CD4-positive, alpha-beta T cell (primary cell): ENCODE measurements at regions of chr5 and their contacts with region 1.

Region 1: GRCh38 chr5:134370871-134371833 is at the start of gene UBE2B:
- DNase-seq: peak; percentile 93 to 99 (median 97)
- ATAC-seq: peak; percentile 73
- H3K4me3 ChIP-seq: peak within 1 kb of the TSS; percentile 100
- H3K4me3 Mint-ChIP-seq: peak within 1 kb of the TSS; percentile 96
- H3K27ac ChIP-seq: peak within 1 kb of the TSS; percentile 97 to 98
- H3K27ac Mint-ChIP-seq: peak within 1 kb of the TSS; percentile 97
- H3K4me1 ChIP-seq: peaks cover 37% of the 10 kb centered on the region
- H3K4me1 Mint-ChIP-seq: peaks cover 68% of the 10 kb centered on the region
- H3K27me3 ChIP-seq: no peaks in the 10 kb centered on the region
- H3K27me3 Mint-ChIP-seq: peaks cover 4% of the 10 kb centered on the region
- CTCF ChIP-seq: no peak
- total RNA-seq, gene UBE2B: 225 to 228 TPM

Region 2: GRCh38 chr5:134176511-134177368 is 194.4 kb before region 1 on chr5 and contains the start of gene SKP1:
- CTCF ChIA-PET with region 1: no interaction called
- POLR2A ChIA-PET with region 1: interaction called, 16 read pairs
- intact Hi-C with region 1: loop called (anchors 2 to 10 kb)
- DNase-seq: peak; percentile 76 to 94 (median 86)
- ATAC-seq: peak; percentile 83
- H3K4me3 ChIP-seq: peak within 1 kb of the TSS; percentile 98
- H3K4me3 Mint-ChIP-seq: peak within 1 kb of the TSS; percentile 97
- H3K27ac ChIP-seq: peak within 1 kb of the TSS; percentile 98 to 99
- H3K27ac Mint-ChIP-seq: peak within 1 kb of the TSS; percentile 98
- H3K4me1 ChIP-seq: peaks cover 19% of the 10 kb centered on the region
- H3K4me1 Mint-ChIP-seq: peaks cover 36% of the 10 kb centered on the region
- H3K27me3 ChIP-seq: no peaks in the 10 kb centered on the region
- H3K27me3 Mint-ChIP-seq: no peaks in the 10 kb centered on the region
- CTCF ChIP-seq: no peak
- total RNA-seq, gene SKP1: 303 to 314 TPM

Region 3: DNA sequence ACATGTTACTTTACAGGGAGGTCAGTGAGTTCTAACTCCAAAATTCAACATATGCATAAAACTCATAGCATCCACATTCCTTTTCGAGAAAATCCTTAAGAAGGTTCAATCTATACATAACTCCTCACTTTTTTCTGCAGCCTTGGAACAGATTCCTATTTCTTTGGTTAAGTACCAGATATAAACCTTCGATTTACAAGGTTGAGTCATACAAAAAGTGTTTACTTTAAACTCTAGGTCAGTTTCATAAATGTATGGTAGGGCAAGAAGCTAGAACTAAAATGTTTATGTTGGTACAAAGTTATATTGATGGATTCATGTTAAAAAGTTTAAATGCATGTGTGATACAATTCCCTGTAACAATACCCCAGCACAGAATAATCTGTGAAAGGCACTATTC is 21.1 kb after region 1 on chr5:
- CTCF ChIA-PET with region 1: no interaction called
- POLR2A ChIA-PET with region 1: interaction called, 16 read pairs
- intact Hi-C with region 1: no loop called
- DNase-seq: no peak
- ATAC-seq: no peak
- H3K4me3 ChIP-seq: no peak overlapping the region
- H3K4me3 Mint-ChIP-seq: no peak overlapping the region
- H3K27ac ChIP-seq: no peak overlapping the region
- H3K27ac Mint-ChIP-seq: no peak overlapping the region
- H3K4me1 ChIP-seq: no peaks in the 10 kb centered on the region
- H3K4me1 Mint-ChIP-seq: peaks cover 5% of the 10 kb centered on the region
- H3K27me3 ChIP-seq: no peaks in the 10 kb centered on the region
- H3K27me3 Mint-ChIP-seq: no peaks in the 10 kb centered on the region
- CTCF ChIP-seq: no peak

Region 4: DNA sequence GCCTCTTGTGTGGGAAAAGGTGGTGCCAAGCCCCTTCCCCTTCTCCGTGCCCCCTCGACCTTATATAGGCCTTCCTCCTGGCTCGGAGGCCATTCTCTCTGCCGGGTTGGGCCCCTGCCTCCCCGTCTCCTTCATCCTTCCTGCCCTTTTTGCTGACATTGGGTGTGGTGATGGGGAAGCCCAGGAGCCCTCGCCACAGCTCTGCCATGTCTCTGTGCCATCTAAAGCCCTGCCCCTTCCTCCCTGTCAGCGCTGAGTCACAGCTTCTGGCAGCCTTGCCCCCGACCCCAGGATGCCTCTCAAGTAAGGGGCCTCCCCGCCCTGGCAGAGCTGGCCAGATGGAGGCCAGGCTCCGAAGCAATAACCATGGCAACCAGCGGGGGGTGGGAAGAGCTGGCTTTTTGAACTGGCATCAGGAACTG is 184.7 kb after region 1 on chr5:
- CTCF ChIA-PET with region 1: interaction called, 3 read pairs
- POLR2A ChIA-PET with region 1: interaction called, 10 read pairs
- intact Hi-C with region 1: no loop called
- DNase-seq: peak; percentile 51 to 95 (median 75)
- ATAC-seq: peak; percentile 91
- H3K4me3 ChIP-seq: no peak overlapping the region
- H3K4me3 Mint-ChIP-seq: peak overlapping the region; percentile 80
- H3K27ac ChIP-seq: peak overlapping the region; percentile 77 to 92
- H3K27ac Mint-ChIP-seq: peak overlapping the region; percentile 95
- H3K4me1 ChIP-seq: peaks cover 50% of the 10 kb centered on the region
- H3K4me1 Mint-ChIP-seq: peaks cover 45% of the 10 kb centered on the region
- H3K27me3 ChIP-seq: no peaks in the 10 kb centered on the region
- H3K27me3 Mint-ChIP-seq: no peaks in the 10 kb centered on the region
- CTCF ChIP-seq: no peak

Region 5: GRCh38 chr5:134648425-134649162 is 277.4 kb after region 1 on chr5 and contains the start of gene SEC24A:
- CTCF ChIA-PET with region 1: no interaction called
- POLR2A ChIA-PET with region 1: no interaction called
- intact Hi-C with region 1: loop called in 1 of 2 experiments (anchors 5 kb)
- DNase-seq: peak; percentile 74 to 98 (median 82)
- ATAC-seq: peak; percentile 78
- H3K4me3 ChIP-seq: peak within 1 kb of the TSS; percentile 80
- H3K4me3 Mint-ChIP-seq: peak within 1 kb of the TSS; percentile 99
- H3K27ac ChIP-seq: peak within 1 kb of the TSS; percentile 93 to 98
- H3K27ac Mint-ChIP-seq: peak within 1 kb of the TSS; percentile 95
- H3K4me1 ChIP-seq: peaks cover 27% of the 10 kb centered on the region
- H3K4me1 Mint-ChIP-seq: peaks cover 31% of the 10 kb centered on the region
- H3K27me3 ChIP-seq: no peaks in the 10 kb centered on the region
- H3K27me3 Mint-ChIP-seq: no peaks in the 10 kb centered on the region
- CTCF ChIP-seq: no peak
- total RNA-seq, gene SEC24A: 11.7 to 12.3 TPM

Region 6: DNA sequence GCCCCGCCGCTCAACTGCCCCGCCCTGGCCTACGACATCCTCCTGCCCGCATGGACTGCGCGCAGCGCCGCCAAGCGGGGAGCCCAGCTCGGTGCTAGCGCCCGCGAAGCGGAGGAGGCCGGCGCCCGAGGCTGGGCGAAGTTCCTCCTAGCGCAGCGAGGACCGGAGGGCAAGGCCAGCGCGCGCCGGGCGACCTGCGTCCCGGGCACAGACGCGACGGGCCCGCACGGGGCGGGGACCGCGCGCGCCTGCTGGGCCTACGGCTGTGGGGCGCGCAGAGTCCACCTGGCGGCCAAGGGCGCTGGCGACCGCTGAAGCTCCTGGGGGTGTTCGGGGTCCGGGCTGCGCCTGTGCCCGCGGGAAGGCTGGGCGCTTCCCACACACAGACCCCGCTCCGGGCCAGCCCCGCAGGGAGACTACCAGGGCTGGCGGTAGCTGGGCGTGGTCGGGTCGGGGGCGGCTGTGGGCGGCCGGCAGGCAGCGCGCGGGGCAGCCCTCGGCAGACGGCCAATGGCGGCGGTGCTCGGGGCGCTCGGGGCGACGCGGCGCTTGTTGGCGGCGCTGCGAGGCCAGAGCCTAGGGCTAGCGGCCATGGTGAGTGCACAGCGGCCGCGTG is 533.6 kb after region 1 on chr5 and contains the start of gene PCBD2:
- CTCF ChIA-PET with region 1: no interaction called
- POLR2A ChIA-PET with region 1: no interaction called
- intact Hi-C with region 1: loop called in 1 of 2 experiments (anchors 10 kb)
- DNase-seq: peak; percentile 83 to 96 (median 90)
- ATAC-seq: peak; percentile 85
- H3K4me3 ChIP-seq: peak within 1 kb of the TSS; percentile 87
- H3K4me3 Mint-ChIP-seq: peak within 1 kb of the TSS; percentile 99
- H3K27ac ChIP-seq: peak within 1 kb of the TSS; percentile 83 to 85
- H3K27ac Mint-ChIP-seq: peak within 1 kb of the TSS; percentile 95
- H3K4me1 ChIP-seq: peaks cover 22% of the 10 kb centered on the region
- H3K4me1 Mint-ChIP-seq: peaks cover 15% of the 10 kb centered on the region
- H3K27me3 ChIP-seq: no peaks in the 10 kb centered on the region
- H3K27me3 Mint-ChIP-seq: no peaks in the 10 kb centered on the region
- CTCF ChIP-seq: peak; percentile 81
- total RNA-seq, gene PCBD2: 5.2 to 5.8 TPM